ENCODE measurements at regions of chr6 and their contacts with region 1.

Region 1: GRCh38 chr6:63635588-63636517 is at the start of gene PHF3:
- DNase-seq: peak; percentile 95
- ATAC-seq: peak; percentile 98
- total RNA-seq, gene PHF3: 33.4 TPM

Region 2: GRCh38 chr6:63683071-63683603 is 47.3 kb after region 1 on chr6:
- intact Hi-C with region 1: loop called (anchors 5 kb)
- DNase-seq: no peak
- ATAC-seq: no peak

Measured in Right ventricle myocardium inferior (tissue), 1 donor.